ENCODE measurements at regions of chr15 and their contacts with region 1.

Region 1: DNA sequence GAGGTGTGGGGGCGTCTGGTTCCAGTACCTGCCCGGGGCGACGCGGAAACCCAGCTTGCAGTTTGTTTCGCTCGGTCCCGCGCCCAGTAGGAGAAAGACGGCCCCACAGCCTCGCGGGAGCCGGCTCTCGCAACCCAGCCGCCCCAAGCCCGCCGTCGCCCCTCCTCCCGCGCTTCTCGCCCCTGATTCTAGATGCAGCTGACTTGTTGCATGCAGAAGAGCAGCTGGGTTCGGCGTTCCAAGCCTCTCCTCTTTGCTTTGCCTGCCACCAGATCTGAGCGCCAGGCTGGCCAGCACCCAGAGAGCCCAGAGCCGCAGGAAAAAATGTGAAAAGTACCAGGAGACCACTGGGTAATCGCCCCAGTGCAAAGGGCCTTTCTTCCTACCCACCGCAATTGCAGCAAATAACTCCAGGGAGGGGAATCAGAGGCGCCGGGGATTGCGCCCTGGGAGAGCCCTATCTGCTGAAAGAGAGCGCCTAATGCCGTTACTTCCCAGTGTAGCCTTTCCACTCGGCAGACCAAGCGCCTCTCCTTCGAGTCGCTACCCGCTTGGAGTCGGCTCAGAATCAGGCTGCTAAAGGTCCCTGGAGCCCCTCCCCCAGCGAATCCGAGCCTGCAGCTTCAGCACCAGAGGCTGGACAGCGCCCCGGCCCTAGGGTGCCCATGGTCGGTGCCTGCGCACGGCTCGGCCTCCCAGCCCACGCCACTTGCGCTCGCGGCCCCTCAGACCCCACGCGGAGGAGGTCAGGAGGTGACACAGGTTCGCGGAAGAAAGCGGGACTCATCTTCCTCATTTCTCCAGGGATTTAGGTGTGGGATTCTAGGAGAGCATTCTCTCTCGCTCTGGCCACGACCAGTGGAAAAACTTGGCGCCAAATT is 15.7 kb upstream of the AEN start:
- DNase-seq: peak in 4 of 10 donors; percentile 43 to 54 (median 51)
- H3K4me3 ChIP-seq: peak overlapping the region; percentile 14 to 78 (median 62)
- H3K27ac ChIP-seq: peak overlapping the region in 45 of 59 donors; percentile 39 to 84 (median 72)
- H3K27me3 ChIP-seq: peaks cover 0 to 40% (median 13%) of the 10 kb centered on the region in 45 donors
- CTCF ChIP-seq: no peak

Region 2: GRCh38 chr15:88476635-88477060 is 128.8 kb before region 1 on chr15:
- intact Hi-C with region 1: loop called in 1 of 2 experiments (anchors 2 kb)
- DNase-seq: peak in 4 of 10 donors; percentile 43 to 72 (median 50)
- H3K4me3 ChIP-seq: peak overlapping the region in 9 of 59 donors; percentile 1 to 23 (median 9)
- H3K27ac ChIP-seq: peak overlapping the region in 55 of 59 donors; percentile 35 to 87 (median 72)
- H3K27me3 ChIP-seq: no peaks in the 10 kb centered on the region
- CTCF ChIP-seq: peak; percentile 55 to 87 (median 74)

Region 3: DNA sequence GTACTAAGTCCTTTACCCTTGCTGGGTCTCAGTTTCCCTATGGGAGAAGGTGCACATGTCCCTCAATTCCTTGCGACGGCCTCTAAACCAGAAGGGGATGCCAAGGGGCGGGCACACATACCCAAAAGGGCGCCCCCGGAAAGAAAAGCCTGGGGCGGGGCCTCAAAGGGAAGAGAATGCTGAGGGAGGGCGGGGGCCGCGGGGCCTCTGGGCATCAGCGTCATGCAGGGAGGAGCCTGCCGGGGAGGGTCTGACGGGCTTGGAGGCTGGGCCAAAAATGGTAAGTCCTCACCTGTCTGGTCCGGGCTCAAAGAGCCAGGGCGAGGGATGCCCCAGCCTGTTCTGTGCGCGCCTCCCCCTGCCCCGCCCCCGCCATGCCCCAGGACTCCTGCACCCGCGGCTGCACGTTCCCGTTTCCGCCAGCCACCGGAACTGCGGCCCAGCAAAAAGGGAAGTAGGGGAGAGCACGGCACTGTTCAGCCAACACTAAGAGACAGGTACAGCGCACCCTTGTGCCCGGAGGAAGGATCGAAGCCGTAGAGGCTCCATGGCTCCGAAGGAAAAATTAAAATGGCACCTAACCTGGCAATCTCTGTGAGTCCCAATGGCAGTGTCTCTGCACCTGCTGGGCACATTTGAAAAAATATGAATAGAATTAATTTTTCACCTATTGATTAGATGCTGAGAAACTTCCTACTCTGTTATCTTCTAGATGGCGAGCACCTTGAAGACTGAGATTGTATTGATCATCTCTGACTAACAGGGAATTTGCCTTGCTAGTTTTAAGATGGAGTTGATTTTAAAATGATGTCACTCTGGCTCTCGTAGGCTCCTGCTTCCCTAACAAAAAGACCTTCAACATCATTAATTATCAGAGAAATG is 58.9 kb before region 1 on chr15 and contains the start of gene DET1:
- intact Hi-C with region 1: loop called in 1 of 2 experiments (anchors 10 kb)
- DNase-seq: peak; percentile 93 to 97 (median 96)
- H3K4me3 ChIP-seq: peak within 1 kb of the TSS; percentile 43 to 97 (median 82)
- H3K27ac ChIP-seq: peak within 1 kb of the TSS; percentile 63 to 98 (median 91)
- H3K27me3 ChIP-seq: no peaks in the 10 kb centered on the region
- CTCF ChIP-seq: peak; percentile 74 to 95 (median 89)
- total RNA-seq, gene DET1: 1.8 to 11.2 (median 7.1) TPM